ENCODE measurements at regions of chr9 and their contacts with region 1.

Region 1: GRCh38 chr9:33374634-33375213 is 27.6 kb downstream of the AQP7 start:
- DNase-seq: peak; percentile 47
- H3K4me3 ChIP-seq: no peak overlapping the region
- H3K27ac ChIP-seq: no peak overlapping the region
- H3K27me3 ChIP-seq: no peaks in the 10 kb centered on the region
- CTCF ChIP-seq: peak; percentile 96

Region 2: GRCh38 chr9:33311953-33312352 is 62.8 kb before region 1 on chr9:
- CTCF ChIA-PET with region 1: interaction called, 16 read pairs
- POLR2A ChIA-PET with region 1: no interaction called
- DNase-seq: no peak
- H3K4me3 ChIP-seq: no peak overlapping the region
- H3K27ac ChIP-seq: no peak overlapping the region
- H3K27me3 ChIP-seq: no peaks in the 10 kb centered on the region
- CTCF ChIP-seq: no peak

Region 3: DNA sequence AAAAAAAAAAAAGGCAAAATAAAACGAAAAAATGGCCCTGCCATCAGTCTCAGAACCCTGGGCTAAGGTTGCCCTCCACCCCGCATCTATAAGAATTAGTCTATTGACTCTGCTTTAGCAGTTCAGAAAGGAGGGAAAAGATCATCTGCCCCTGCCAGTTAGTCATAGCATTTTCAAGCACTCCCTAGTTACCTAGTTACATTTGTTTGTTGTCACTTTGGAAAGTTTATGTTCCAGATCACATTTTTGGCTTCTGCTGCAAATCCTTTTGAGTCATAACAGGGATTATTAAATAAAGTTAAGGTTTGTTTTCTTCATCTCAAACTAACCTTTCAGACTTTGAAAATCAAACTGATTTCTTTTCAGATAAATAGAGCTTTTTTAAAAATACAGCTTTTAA is 24.4 kb before region 1 on chr9:
- CTCF ChIA-PET with region 1: interaction called, 39 read pairs
- POLR2A ChIA-PET with region 1: no interaction called
- DNase-seq: peak; percentile 80
- H3K4me3 ChIP-seq: no peak overlapping the region
- H3K27ac ChIP-seq: peak overlapping the region; percentile 84
- H3K27me3 ChIP-seq: no peaks in the 10 kb centered on the region
- CTCF ChIP-seq: no peak

Region 4: DNA sequence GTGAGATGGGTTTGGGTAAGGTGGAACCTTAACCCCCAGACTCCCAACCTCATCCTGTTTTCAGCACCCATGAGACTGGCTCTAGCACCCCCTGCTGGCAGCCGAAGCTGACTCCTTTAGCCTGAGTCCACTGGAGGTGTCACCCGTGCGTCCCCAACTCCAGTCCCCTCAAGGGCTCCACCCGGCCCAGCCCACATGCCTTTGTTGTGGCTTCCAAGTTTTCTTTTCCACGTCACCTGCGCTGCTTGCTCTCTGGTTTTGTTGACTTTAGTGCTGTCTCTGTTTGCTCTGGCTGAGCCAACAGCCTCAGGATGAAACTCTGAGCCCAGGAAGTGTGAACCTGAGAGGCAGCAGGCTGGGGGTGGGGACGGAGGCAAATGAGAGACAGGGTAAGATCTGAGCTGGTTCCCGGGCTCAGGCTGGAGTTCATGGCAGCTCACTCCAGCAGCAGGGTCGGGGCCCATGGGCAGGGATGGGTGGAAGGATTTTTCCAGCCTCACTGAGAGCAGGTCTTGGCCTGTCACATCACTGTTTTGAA is 40.8 kb after region 1 on chr9:
- CTCF ChIA-PET with region 1: interaction called, 36 read pairs
- POLR2A ChIA-PET with region 1: no interaction called
- DNase-seq: no peak
- H3K4me3 ChIP-seq: no peak overlapping the region
- H3K27ac ChIP-seq: no peak overlapping the region
- H3K27me3 ChIP-seq: peaks cover 18% of the 10 kb centered on the region
- CTCF ChIP-seq: peak; percentile 74

Region 5: DNA sequence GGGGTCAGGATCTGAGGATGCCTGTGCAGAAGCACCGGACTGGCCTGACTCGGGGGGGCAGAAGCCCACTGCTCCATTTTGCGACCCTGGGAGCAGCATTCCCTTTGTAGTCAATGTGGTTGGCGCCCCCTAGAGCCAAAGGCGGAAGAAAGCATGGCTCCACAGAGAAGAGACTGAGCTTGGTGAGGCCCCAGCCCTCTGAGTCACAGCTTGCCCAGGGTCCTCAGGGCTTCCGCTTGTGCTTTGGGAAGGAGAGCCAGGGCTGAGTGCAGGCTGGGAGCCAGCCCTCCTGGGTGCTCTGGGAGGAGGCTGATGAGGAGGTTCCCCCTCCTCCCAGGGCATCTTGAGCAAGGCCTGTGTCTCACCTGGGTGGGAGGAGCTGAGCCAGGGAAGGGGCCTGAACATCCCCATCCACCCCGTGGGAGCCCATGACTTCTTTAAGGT is 78.1 kb after region 1 on chr9:
- CTCF ChIA-PET with region 1: interaction called, 47 read pairs
- POLR2A ChIA-PET with region 1: interaction called, 3 read pairs
- DNase-seq: peak; percentile 46
- H3K4me3 ChIP-seq: no peak overlapping the region
- H3K27ac ChIP-seq: no peak overlapping the region
- H3K27me3 ChIP-seq: no peaks in the 10 kb centered on the region
- CTCF ChIP-seq: peak; percentile 89

Region 6: GRCh38 chr9:33473643-33474352 is 99.1 kb after region 1 on chr9 and contains the start of gene NOL6:
- CTCF ChIA-PET with region 1: interaction called, 74 read pairs
- POLR2A ChIA-PET with region 1: no interaction called
- DNase-seq: peak; percentile 98
- H3K4me3 ChIP-seq: peak within 1 kb of the TSS; percentile 99
- H3K27ac ChIP-seq: peak within 1 kb of the TSS; percentile 52
- H3K27me3 ChIP-seq: no peaks in the 10 kb centered on the region
- CTCF ChIP-seq: no peak
- polyA plus RNA-seq, gene NOL6: 34.7 and 42.6 TPM in 2 replicates

Measured in AG04450 (cell line).